AG04450 (cell line): ENCODE measurements at regions of chr9 and their contacts with region 1.

Region 1: GRCh38 chr9:109766336-109766735 is 13.7 kb upstream of the PALM2AKAP2 start:
- DNase-seq: peak; percentile 85
- H3K4me3 ChIP-seq: no peak overlapping the region
- H3K27ac ChIP-seq: peak overlapping the region; percentile 82
- H3K27me3 ChIP-seq: no peaks in the 10 kb centered on the region
- CTCF ChIP-seq: no peak

Region 2: GRCh38 chr9:109779711-109780452 is 13.5 kb after region 1 on chr9 and contains the start of gene PALM2AKAP2:
- CTCF ChIA-PET with region 1: interaction called, 11 read pairs
- POLR2A ChIA-PET with region 1: no interaction called
- DNase-seq: no peak
- H3K4me3 ChIP-seq: peak within 1 kb of the TSS; percentile 88
- H3K27ac ChIP-seq: peak within 1 kb of the TSS; percentile 66
- H3K27me3 ChIP-seq: no peaks in the 10 kb centered on the region
- CTCF ChIP-seq: peak; percentile 32; the same call in 1 of the 2 replicates
- polyA plus RNA-seq, gene PALM2AKAP2: 4.6 and 5.0 TPM in 2 replicates

Region 3: DNA sequence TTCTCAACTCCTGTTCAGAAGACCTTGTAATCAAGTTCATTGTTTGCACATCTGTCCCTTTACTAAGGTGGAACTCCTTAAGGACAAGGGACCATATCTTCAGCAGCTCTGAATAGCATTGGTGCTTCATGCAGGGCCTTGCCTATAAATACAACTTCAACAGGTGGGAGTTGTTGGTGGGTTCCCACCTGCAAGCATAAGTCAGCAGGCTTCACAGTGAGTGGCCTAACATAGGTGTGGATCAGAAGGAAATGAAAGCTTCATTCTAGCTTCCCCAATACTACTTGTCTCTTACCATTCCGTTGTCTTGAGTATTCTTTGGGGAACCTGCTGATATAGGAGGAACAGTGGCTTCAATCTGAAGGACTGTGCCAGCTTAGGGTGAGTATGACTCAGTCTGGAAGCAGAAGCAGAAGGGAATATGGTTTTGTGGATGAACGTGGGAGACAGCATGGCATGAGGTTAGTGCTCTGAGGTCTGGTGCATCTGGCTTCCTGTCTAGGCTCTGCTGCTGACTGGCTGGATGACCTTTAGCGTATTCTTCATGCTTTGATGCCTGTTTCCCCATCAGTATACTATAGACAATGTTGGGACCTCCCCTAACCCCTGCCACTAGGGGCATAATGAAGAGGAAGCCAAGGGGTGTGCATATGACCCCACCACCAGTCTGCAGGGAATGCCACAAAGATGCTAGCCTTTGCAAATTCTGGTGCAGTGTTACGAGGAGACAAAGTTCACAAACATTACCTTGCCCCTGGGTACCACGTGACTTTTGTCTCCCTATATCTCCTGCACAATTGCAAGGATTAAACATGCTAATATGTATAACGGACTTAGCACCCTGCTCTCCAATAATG is 205.9 kb after region 1 on chr9:
- CTCF ChIA-PET with region 1: no interaction called
- POLR2A ChIA-PET with region 1: no interaction called
- DNase-seq: no peak
- H3K4me3 ChIP-seq: no peak overlapping the region
- H3K27ac ChIP-seq: no peak overlapping the region
- H3K27me3 ChIP-seq: no peaks in the 10 kb centered on the region
- CTCF ChIP-seq: no peak

Region 4: GRCh38 chr9:110207071-110207946 is 441.0 kb after region 1 on chr9:
- CTCF ChIA-PET with region 1: no interaction called
- POLR2A ChIA-PET with region 1: no interaction called
- DNase-seq: no peak
- H3K4me3 ChIP-seq: no peak overlapping the region
- H3K27ac ChIP-seq: no peak overlapping the region
- H3K27me3 ChIP-seq: peaks cover 29% of the 10 kb centered on the region
- CTCF ChIP-seq: no peak